ENCODE measurements at regions of chr1 and their contacts with region 1.

Region 1: DNA sequence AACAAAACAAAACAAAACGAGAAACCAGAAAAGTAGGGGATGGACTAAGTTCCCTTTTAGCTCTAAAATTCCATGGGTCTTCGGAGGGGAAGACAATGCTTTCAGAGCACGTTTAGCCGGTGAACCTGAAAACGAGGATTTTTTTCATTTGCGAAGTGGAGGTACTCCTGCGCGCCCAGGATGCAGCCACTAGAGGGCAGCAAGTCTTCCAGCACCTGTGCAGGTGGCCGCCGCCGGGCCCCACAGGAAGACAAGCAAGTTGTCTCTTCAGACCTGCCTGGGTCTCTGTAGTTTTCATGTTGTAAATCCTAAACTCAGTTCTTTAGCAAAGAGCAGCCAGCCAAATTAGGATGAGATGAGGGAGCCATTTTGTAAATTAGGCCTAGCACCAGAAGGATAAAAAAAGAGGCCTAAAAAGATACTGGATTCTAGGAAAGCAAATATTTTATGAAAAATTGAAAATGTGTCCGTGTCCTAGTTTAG is 17.7 kb upstream of the SNX27 start:
- DNase-seq: no peak
- H3K4me3 ChIP-seq: no peak overlapping the region
- H3K27ac ChIP-seq: no peak overlapping the region
- H3K4me1 ChIP-seq: peaks cover 0 to 10% (median 0%) of the 10 kb centered on the region in 3 donors
- H3K27me3 ChIP-seq: no peaks in the 10 kb centered on the region
- CTCF ChIP-seq: peak; percentile 87 to 96 (median 92)
- POLR2A ChIP-seq: no peak

Region 2: DNA sequence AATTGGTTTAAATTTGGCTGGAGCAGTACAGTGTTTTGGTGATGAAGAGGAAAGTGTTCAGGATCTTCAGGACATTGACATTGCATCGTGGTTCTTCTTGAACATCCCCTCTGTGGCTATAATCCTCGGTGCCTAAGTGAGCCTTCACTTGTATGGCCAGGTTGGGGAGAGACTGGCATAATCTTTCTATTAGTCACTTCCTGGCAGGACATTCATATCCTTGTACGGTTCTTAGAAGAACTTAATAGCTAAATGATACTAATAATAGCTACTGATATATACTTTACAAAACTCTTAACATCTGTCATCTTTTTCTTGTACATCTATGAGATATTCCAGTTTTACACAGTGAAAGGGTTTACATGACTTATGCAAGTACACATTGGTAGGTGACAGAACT is 86.6 kb after region 1 on chr1:
- intact Hi-C with region 1: loop called (anchors 10 kb)
- DNase-seq: no peak
- H3K4me3 ChIP-seq: no peak overlapping the region
- H3K27ac ChIP-seq: peak overlapping the region; percentile 10 to 69 (median 46)
- H3K4me1 ChIP-seq: peaks cover 0 to 17% (median 0%) of the 10 kb centered on the region in 3 donors
- H3K27me3 ChIP-seq: no peaks in the 10 kb centered on the region
- CTCF ChIP-seq: no peak
- POLR2A ChIP-seq: no peak

Region 3: GRCh38 chr1:151729966-151730291 is 135.7 kb after region 1 on chr1:
- intact Hi-C with region 1: loop called (anchors 5 kb)
- DNase-seq: no peak
- H3K4me3 ChIP-seq: no peak overlapping the region
- H3K27ac ChIP-seq: no peak overlapping the region
- H3K4me1 ChIP-seq: peaks cover 0 to 5% (median 0%) of the 10 kb centered on the region in 3 donors
- H3K27me3 ChIP-seq: peaks cover 0 to 29% (median 0%) of the 10 kb centered on the region in 4 donors
- CTCF ChIP-seq: no peak
- POLR2A ChIP-seq: no peak